CD14-positive monocyte (primary cell): ENCODE measurements at regions of chr17 and their contacts with region 1.

Region 1: GRCh38 chr17:22251498-22251897 is 559.2 kb downstream of the KCNJ18 start:
- DNase-seq: no peak
- H3K4me3 ChIP-seq: no peak overlapping the region
- H3K4me3 Mint-ChIP-seq: no peak overlapping the region
- H3K27ac ChIP-seq: no peak overlapping the region
- H3K27ac Mint-ChIP-seq: no peak overlapping the region
- H3K4me1 ChIP-seq: no peaks in the 10 kb centered on the region
- H3K4me1 Mint-ChIP-seq: no peaks in the 10 kb centered on the region
- H3K27me3 ChIP-seq: no peaks in the 10 kb centered on the region
- H3K27me3 Mint-ChIP-seq: no peaks in the 10 kb centered on the region
- CTCF ChIP-seq: no peak

Region 2: DNA sequence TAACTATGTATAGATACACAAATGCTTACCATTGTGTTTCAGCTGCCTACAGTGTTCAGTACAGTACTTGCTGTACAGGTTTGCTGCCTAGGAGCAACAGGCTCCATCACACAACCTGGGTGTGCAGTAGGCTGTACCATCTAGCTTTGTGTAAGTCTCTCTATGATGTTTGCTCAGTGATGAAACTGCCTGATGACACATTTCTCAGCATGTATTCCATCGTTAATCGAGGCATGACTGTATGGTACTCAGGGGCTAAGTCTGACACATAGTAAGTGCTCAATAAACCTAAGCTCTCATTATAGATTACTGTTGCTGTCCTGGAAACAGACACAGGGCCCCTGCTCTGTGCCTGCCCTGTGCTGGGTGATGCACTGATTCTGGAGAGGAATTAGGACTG is 857.2 kb before region 1 on chr17:
- intact Hi-C with region 1: no loop called
- DNase-seq: no peak
- H3K4me3 ChIP-seq: no peak overlapping the region
- H3K4me3 Mint-ChIP-seq: no peak overlapping the region
- H3K27ac ChIP-seq: no peak overlapping the region
- H3K27ac Mint-ChIP-seq: peak overlapping the region in 1 of 7 donors; percentile 44
- H3K4me1 ChIP-seq: no peaks in the 10 kb centered on the region
- H3K4me1 Mint-ChIP-seq: no peaks in the 10 kb centered on the region
- H3K27me3 ChIP-seq: no peaks in the 10 kb centered on the region
- H3K27me3 Mint-ChIP-seq: peaks cover 1 to 4% (median 4%) of the 10 kb centered on the region in 3 donors
- CTCF ChIP-seq: no peak

Region 3: DNA sequence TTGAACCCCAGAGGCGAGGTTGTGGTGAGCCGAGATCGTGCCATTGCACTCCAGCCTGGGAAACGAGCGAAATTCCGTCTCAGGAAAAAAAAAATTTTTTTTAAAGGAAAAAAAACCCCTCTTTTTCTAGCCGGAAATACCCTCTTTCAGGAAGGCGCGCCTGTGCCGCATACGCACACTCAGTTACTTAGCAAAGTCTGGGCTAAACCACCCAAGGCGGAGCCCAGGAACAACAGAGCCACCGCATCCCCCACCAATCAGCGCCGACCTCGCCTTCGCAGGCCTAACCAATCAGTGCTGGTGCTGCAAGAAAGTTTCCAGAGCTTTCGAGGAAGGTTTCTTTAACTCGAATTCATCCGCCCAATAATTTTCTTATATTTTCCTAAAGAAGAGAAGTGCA is 48.8 kb before region 1 on chr17:
- intact Hi-C with region 1: loop called in 1 of 2 experiments (anchors 10 kb)
- DNase-seq: no peak
- H3K4me3 ChIP-seq: no peak overlapping the region
- H3K4me3 Mint-ChIP-seq: no peak overlapping the region
- H3K27ac ChIP-seq: no peak overlapping the region
- H3K27ac Mint-ChIP-seq: no peak overlapping the region
- H3K4me1 ChIP-seq: no peaks in the 10 kb centered on the region
- H3K4me1 Mint-ChIP-seq: no peaks in the 10 kb centered on the region
- H3K27me3 ChIP-seq: no peaks in the 10 kb centered on the region
- H3K27me3 Mint-ChIP-seq: no peaks in the 10 kb centered on the region
- CTCF ChIP-seq: no peak